Activated CD4-positive, alpha-beta memory T cell treated with anti-CD3 and anti-CD28 coated beads for 36 hours (primary cell): ENCODE measurements at regions of chr7 and their contacts with region 1.

Region 1: GRCh38 chr7:30594549-30595435 is at the start of gene GARS1:
- DNase-seq: peak; percentile 92
- H3K4me3 Mint-ChIP-seq: peak within 1 kb of the TSS; percentile 99
- H3K27ac Mint-ChIP-seq: peak within 1 kb of the TSS; percentile 95
- H3K4me1 Mint-ChIP-seq: peaks cover 53% of the 10 kb centered on the region
- H3K27me3 Mint-ChIP-seq: no peaks in the 10 kb centered on the region
- total RNA-seq, gene GARS1: 345 to 368 TPM

Region 2: DNA sequence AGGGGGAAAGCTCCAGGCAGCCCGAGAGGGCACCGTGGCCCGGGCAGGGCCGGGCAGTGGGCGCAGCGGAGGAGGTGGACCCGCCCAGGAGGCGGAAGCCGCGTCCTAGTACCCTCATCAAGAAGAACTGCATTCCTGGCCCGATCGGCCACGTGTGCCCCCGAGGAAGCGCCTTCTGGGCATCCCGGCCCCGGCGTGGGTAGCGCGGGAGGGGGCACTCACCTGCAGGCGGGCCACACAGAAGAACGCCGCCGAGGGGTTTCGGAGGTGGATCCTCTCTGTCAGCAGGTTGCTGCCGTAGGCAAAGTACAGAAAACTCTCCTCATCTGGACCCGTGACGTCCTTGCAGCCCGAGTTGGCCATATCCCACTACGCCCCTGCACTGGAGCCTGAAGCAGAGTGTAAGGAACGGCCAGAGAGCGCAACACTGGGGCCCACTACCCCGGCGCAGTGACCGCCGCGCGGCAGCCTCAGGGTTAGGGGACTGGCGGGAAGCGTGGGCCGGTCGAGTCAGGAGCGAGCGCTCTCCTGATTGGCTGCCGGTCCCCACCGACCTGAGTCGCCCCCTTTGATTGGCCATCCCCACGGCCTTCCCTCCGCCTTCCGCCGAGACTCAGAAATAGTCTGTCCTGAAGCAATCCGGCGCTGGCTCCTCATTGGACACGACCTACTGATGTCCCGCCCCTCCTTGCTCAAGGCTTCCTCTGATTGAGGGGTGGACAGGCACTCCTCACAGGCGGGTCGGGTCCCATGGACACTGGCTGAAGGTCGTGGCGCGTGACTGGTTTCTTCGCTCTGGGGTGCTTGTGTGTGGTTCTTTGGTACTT is 90.2 kb before region 1 on chr7 and contains the start of gene GGCT:
- CTCF ChIA-PET with region 1: no interaction called
- POLR2A ChIA-PET with region 1: no interaction called
- intact Hi-C with region 1: loop called (anchors 2 kb)
- DNase-seq: peak; percentile 99
- H3K4me3 Mint-ChIP-seq: peak within 1 kb of the TSS; percentile 77
- H3K27ac Mint-ChIP-seq: peak within 1 kb of the TSS; percentile 79
- H3K4me1 Mint-ChIP-seq: peaks cover 38% of the 10 kb centered on the region
- H3K27me3 Mint-ChIP-seq: no peaks in the 10 kb centered on the region
- total RNA-seq, gene GGCT: 60.5 to 68.0 TPM

Region 3: GRCh38 chr7:30604901-30605300 is 10.1 kb after region 1 on chr7:
- CTCF ChIA-PET with region 1: no interaction called
- POLR2A ChIA-PET with region 1: interaction called, 5 read pairs
- intact Hi-C with region 1: loop called (anchors 1 kb)
- DNase-seq: no peak
- H3K4me3 Mint-ChIP-seq: no peak overlapping the region
- H3K27ac Mint-ChIP-seq: peak overlapping the region; percentile 54
- H3K4me1 Mint-ChIP-seq: peaks cover 53% of the 10 kb centered on the region
- H3K27me3 Mint-ChIP-seq: no peaks in the 10 kb centered on the region

Region 4: DNA sequence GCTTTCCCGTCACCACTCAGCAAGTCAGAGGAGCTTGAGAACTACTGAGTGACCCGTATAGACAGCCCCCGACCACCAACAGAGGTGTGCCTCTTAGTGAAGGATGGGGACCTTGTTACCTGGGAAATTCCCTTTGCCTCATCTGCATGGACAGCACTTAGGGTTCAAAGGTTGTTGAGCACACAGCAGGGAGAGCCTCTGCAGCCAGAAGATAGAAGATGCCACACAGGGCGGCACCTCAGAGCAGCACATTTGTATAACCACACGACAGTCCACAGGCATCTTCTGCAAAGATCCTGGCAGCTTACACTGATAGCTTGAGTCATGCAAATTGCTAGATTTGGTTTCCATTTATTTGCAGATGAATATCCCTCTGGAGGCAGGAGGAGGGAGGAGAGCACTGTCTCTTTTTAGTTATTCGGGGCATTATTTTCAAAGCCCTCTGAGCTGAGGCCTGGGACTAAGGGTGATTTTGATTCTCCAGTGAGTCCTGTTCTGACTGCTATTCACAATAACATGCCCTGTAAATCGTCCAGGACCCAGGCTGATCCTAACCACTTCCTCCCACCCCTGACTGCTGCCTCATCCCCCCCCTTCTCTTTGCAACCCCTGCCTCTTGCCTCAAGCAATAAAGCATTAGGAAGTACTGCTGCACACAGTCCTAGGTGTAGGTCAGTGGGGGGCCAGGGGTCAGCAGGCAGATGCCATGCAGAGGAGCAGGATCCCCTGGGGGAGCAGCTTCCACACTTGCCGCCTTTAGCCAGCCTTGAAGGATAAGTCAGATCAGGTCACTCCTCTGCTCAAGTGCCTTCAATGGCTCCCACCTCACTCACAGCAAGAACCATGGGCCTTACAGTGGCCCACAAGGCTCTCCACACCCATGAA is 132.5 kb after region 1 on chr7:
- CTCF ChIA-PET with region 1: no interaction called
- POLR2A ChIA-PET with region 1: no interaction called
- intact Hi-C with region 1: loop called (anchors 2 kb)
- DNase-seq: peak; percentile 71
- H3K4me3 Mint-ChIP-seq: peak overlapping the region; percentile 65
- H3K27ac Mint-ChIP-seq: peak overlapping the region; percentile 79
- H3K4me1 Mint-ChIP-seq: peaks cover 44% of the 10 kb centered on the region
- H3K27me3 Mint-ChIP-seq: no peaks in the 10 kb centered on the region